Gastrocnemius medialis (tissue), 4 donors: ENCODE measurements at regions of chr12 and their contacts with region 1.

Region 1: GRCh38 chr12:13534645-13535398 is 338.3 kb downstream of the EMP1 start:
- DNase-seq: peak in 1 of 2 donors; percentile 24
- ATAC-seq: no peak
- H3K4me3 ChIP-seq: peak overlapping the region in 1 of 4 donors; percentile 15
- H3K27ac ChIP-seq: no peak overlapping the region
- H3K4me1 ChIP-seq: no peaks in the 10 kb centered on the region
- H3K27me3 ChIP-seq: no peaks in the 10 kb centered on the region
- CTCF ChIP-seq: peak; percentile 55 to 75 (median 64)
- POLR2A ChIP-seq: no peak

Region 2: DNA sequence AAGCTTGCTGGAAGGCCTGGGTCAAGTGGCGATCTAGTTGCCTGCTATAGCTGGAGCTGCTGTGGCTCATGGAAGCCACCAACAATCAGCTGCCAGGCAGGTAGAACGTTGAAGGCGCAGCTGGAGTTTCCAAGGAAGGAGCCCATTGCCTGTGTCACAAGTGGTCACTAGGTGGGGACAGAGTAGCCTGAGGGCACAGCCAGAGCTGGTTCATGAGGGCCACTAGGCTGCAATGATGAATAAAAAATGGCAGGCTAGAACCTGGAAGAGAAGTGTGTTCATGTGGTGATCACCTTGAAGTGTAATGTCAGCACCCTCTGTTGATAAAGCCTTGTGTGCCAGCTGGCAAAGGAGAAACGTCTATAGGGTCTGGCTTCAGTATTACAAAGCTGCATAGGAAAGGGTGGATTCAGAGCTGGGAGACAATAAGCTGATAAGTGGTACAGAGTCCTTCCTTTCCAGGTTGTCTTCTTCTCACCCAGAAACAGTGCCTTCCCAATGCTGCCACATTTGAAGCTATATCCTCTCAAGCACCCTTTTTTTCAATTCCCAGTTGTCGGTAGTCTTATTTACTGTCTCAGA is 172.5 kb before region 1 on chr12:
- in situ Hi-C with region 1: loop called in 2 of 4 experiments (anchors 10 kb)
- intact Hi-C with region 1: loop called (anchors 2 kb)
- DNase-seq: peak in 1 of 2 donors; percentile 24
- ATAC-seq: peak; percentile 54 to 64
- H3K4me3 ChIP-seq: no peak overlapping the region
- H3K27ac ChIP-seq: no peak overlapping the region
- H3K4me1 ChIP-seq: no peaks in the 10 kb centered on the region
- H3K27me3 ChIP-seq: no peaks in the 10 kb centered on the region
- CTCF ChIP-seq: peak; percentile 47 to 74 (median 52)
- POLR2A ChIP-seq: no peak

Region 3: GRCh38 chr12:13799574-13799973 is 264.8 kb after region 1 on chr12:
- in situ Hi-C with region 1: no loop called
- intact Hi-C with region 1: no loop called
- DNase-seq: no peak
- ATAC-seq: no peak
- H3K4me3 ChIP-seq: no peak overlapping the region
- H3K27ac ChIP-seq: no peak overlapping the region
- H3K4me1 ChIP-seq: no peaks in the 10 kb centered on the region
- H3K27me3 ChIP-seq: no peaks in the 10 kb centered on the region
- CTCF ChIP-seq: no peak
- POLR2A ChIP-seq: no peak